Activated B cell treated with CpG ODN at 0.5 μM for 24 hours (primary cell): ENCODE measurements at regions of chr2 and their contacts with region 1.

Region 1: DNA sequence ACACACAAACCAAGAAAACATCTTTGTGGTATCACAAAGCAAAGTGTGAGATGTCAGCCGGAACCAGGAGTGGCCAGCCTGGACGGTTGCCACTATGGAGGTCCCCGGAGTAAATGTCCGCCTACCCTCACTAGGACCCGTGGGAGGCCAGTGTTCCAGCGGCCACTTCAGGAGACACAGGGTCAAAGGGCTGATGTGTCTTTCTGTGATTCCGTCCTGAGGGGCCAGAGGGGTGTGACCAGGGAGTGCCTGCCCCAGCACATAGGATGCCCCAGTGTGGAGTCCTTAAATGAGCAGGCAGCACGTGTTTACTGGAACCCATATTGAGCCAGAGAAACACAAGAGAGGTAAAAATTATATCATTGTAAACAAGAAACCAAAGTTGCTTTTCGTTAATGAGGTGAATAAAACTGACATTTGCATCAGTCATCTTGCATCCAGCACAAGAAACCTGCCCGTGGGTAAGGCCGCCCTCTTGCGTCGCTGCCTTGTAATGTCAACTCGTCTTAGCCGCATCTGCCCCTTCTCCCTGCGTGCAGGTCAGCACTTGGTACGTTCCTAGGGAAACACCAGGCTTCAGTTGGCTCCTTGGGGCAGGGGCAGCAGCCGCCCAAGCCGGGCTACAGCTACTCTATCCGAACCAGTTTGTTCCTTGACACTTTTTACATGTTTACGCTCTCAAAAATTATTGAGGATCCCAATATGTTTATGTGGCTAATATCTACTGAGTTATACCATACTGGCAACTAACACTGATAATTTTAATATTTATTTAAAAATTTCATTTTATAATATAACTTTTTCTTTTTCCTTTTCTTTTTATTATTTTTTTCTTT is 46.7 kb upstream of the LAPTM4A start:
- DNase-seq: peak; percentile 62
- ATAC-seq: peak; percentile 95
- H3K4me3 Mint-ChIP-seq: no peak overlapping the region
- H3K27ac Mint-ChIP-seq: no peak overlapping the region
- H3K4me1 Mint-ChIP-seq: no peaks in the 10 kb centered on the region
- H3K27me3 Mint-ChIP-seq: peaks cover 12% of the 10 kb centered on the region
- CTCF ChIP-seq: peak; percentile 96

Region 2: GRCh38 chr2:18387441-18388206 is 1710.5 kb before region 1 on chr2:
- CTCF ChIA-PET with region 1: no interaction called
- POLR2A ChIA-PET with region 1: no interaction called
- intact Hi-C with region 1: loop called (anchors 5 kb)
- DNase-seq: peak; percentile 36
- ATAC-seq: peak; percentile 61
- H3K4me3 Mint-ChIP-seq: no peak overlapping the region
- H3K27ac Mint-ChIP-seq: no peak overlapping the region
- H3K4me1 Mint-ChIP-seq: peaks cover 5% of the 10 kb centered on the region
- H3K27me3 Mint-ChIP-seq: peaks cover 8% of the 10 kb centered on the region
- CTCF ChIP-seq: no peak

Region 3: GRCh38 chr2:19868705-19869580 is 229.2 kb before region 1 on chr2:
- CTCF ChIA-PET with region 1: no interaction called
- POLR2A ChIA-PET with region 1: no interaction called
- intact Hi-C with region 1: loop called (anchors 2 kb)
- DNase-seq: peak; percentile 50
- ATAC-seq: peak; percentile 89
- H3K4me3 Mint-ChIP-seq: peak overlapping the region; percentile 91
- H3K27ac Mint-ChIP-seq: peak overlapping the region; percentile 88
- H3K4me1 Mint-ChIP-seq: peaks cover 22% of the 10 kb centered on the region
- H3K27me3 Mint-ChIP-seq: no peaks in the 10 kb centered on the region
- CTCF ChIP-seq: no peak

Region 4: GRCh38 chr2:19955544-19956422 is 142.3 kb before region 1 on chr2:
- CTCF ChIA-PET with region 1: interaction called, 7 read pairs
- POLR2A ChIA-PET with region 1: no interaction called
- intact Hi-C with region 1: loop called (anchors 1 kb)
- DNase-seq: no peak
- ATAC-seq: peak; percentile 83
- H3K4me3 Mint-ChIP-seq: no peak overlapping the region
- H3K27ac Mint-ChIP-seq: no peak overlapping the region
- H3K4me1 Mint-ChIP-seq: no peaks in the 10 kb centered on the region
- H3K27me3 Mint-ChIP-seq: no peaks in the 10 kb centered on the region
- CTCF ChIP-seq: peak; percentile 80

Region 5: DNA sequence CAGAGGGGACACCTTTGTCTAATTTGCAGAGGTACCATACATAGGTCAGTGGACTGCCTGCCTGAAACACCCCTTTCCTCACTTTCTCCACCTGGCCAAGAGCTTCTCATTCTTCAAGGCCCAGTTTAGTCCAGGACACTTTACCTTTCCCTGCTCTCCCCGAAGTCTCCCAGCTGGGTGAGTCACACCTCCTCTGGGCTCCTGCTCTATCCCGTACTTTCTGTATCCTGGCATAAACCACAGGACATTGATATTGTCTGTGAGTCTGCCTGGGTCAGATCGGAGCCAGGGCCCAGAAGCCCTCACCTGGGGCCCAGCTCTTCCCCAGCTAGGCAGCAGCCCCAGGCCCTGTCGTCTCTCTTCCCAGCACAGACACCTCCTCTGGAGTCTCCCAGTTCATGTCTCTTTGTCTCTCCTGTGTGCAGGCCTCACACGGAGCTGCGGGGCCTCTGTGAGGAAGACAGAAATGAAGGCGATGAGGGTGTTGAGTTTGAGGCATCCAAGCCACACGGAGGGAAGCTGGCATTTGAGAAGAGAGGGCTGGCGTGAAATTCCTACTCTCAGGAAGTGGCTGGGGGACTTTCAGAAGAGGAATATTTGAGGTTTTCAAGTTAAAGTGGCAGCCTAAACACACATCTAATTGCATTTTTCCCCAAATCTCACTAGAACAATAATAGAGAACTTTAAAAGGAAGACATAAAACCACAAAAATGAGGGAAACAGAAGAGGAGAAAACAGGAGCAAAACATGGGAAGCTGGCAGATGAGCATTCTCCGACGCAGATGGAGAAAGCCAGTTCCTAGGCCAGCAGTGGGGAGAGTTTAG is 32.9 kb after region 1 on chr2:
- CTCF ChIA-PET with region 1: no interaction called
- POLR2A ChIA-PET with region 1: no interaction called
- intact Hi-C with region 1: no loop called
- DNase-seq: no peak
- ATAC-seq: no peak
- H3K4me3 Mint-ChIP-seq: no peak overlapping the region
- H3K27ac Mint-ChIP-seq: no peak overlapping the region
- H3K4me1 Mint-ChIP-seq: no peaks in the 10 kb centered on the region
- H3K27me3 Mint-ChIP-seq: peaks cover 18% of the 10 kb centered on the region
- CTCF ChIP-seq: no peak

Region 6: GRCh38 chr2:20231632-20232031 is 133.5 kb after region 1 on chr2:
- CTCF ChIA-PET with region 1: no interaction called
- POLR2A ChIA-PET with region 1: no interaction called
- intact Hi-C with region 1: no loop called
- DNase-seq: no peak
- ATAC-seq: no peak
- H3K4me3 Mint-ChIP-seq: no peak overlapping the region
- H3K27ac Mint-ChIP-seq: no peak overlapping the region
- H3K4me1 Mint-ChIP-seq: no peaks in the 10 kb centered on the region
- H3K27me3 Mint-ChIP-seq: peaks cover 33% of the 10 kb centered on the region
- CTCF ChIP-seq: no peak